ENCODE measurements at regions of chr5 and their contacts with region 1.

Region 1: DNA sequence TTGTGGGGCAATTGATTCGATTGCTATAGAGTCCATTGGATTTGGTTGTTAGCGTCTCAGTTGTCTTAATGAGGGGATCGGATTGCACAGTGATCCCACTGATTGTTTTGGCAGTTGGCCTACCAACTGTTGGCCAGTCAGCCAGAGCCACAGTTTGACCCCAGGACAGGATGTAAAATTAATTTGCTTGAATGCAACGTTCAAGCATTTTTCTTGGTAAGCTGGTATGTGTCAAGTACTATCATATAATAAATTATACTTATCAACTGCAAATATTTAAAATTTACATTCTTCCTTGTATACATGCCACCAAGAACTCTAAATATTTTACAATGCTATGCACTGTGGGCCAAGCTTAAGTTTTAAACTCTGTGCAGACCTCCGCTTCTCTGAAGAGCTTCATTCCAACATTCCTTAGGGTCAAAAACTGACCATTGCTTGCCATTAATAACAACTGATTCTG is 80.4 kb upstream of the OSMR start:
- DNase-seq: no peak
- ATAC-seq: no peak
- H3K4me3 ChIP-seq: no peak overlapping the region
- H3K27ac ChIP-seq: no peak overlapping the region
- H3K4me1 ChIP-seq: no peaks in the 10 kb centered on the region
- H3K27me3 ChIP-seq: peaks cover 0 to 3% of the 10 kb centered on the region in 2 experiments; a peak in 1 of 5 replicates
- CTCF ChIP-seq: no peak
- EP300 ChIP-seq: no peak
- POLR2A ChIP-seq: no peak
- RAD21 ChIP-seq: no peak

Region 2: GRCh38 chr5:38807570-38808483 is 42.4 kb after region 1 on chr5:
- CTCF ChIA-PET with region 1: no interaction called
- POLR2A ChIA-PET with region 1: no interaction called
- in situ Hi-C with region 1: no loop called
- intact Hi-C with region 1: no loop called
- DNase-seq: peak in 2 of 4 experiments; percentile 41 to 50
- ATAC-seq: no peak
- H3K4me3 ChIP-seq: no peak overlapping the region
- H3K27ac ChIP-seq: peak overlapping the region; percentile 42; the same call in 1 of the 3 replicates
- H3K4me1 ChIP-seq: peaks cover 2 to 7% of the 10 kb centered on the region in 2 experiments; a peak in 3 of 5 replicates
- H3K27me3 ChIP-seq: no peaks in the 10 kb centered on the region
- CTCF ChIP-seq: no peak
- EP300 ChIP-seq: peak; percentile 91
- POLR2A ChIP-seq: no peak
- RAD21 ChIP-seq: no peak

Region 3: GRCh38 chr5:38938424-38938823 is 173.0 kb after region 1 on chr5:
- CTCF ChIA-PET with region 1: no interaction called
- POLR2A ChIA-PET with region 1: no interaction called
- in situ Hi-C with region 1: no loop called
- intact Hi-C with region 1: no loop called
- DNase-seq: no peak
- ATAC-seq: no peak
- H3K4me3 ChIP-seq: no peak overlapping the region
- H3K27ac ChIP-seq: no peak overlapping the region
- H3K4me1 ChIP-seq: peaks cover 0 to 2% of the 10 kb centered on the region in 2 experiments; a peak in 2 of 5 replicates
- H3K27me3 ChIP-seq: no peaks in the 10 kb centered on the region
- CTCF ChIP-seq: no peak
- EP300 ChIP-seq: no peak
- POLR2A ChIP-seq: no peak
- RAD21 ChIP-seq: no peak

Region 4: DNA sequence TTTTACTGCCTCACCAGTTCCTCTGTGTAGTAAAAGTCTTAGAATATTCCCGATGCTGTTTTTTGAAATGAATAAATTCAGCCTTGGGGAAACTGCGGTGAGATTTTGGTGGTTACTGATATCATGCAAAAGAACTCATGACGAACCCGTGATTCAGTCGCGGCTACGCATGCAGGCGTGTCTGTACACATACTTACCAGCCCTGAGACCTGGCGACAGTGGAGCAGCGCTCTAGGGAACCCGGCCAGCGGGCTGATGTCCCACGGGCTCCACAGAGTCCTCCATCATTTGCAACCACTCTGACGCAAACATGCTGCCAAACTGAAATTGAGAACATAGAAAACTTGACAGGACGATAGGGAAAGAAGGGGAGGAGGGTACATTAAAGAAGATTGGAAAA is 975.0 kb after region 1 on chr5:
- CTCF ChIA-PET with region 1: no interaction called
- POLR2A ChIA-PET with region 1: no interaction called
- in situ Hi-C with region 1: loop called (anchors 10 kb)
- intact Hi-C with region 1: no loop called
- DNase-seq: no peak
- ATAC-seq: peak; percentile 52; the same call in 1 of the 3 replicates
- H3K4me3 ChIP-seq: no peak overlapping the region
- H3K27ac ChIP-seq: no peak overlapping the region
- H3K4me1 ChIP-seq: no peaks in the 10 kb centered on the region
- H3K27me3 ChIP-seq: no peaks in the 10 kb centered on the region; a peak in 1 of 5 replicates
- CTCF ChIP-seq: no peak
- EP300 ChIP-seq: no peak
- POLR2A ChIP-seq: no peak
- RAD21 ChIP-seq: no peak